Thyroid gland (tissue), 4 donors: ENCODE measurements at regions of chr20 and their contacts with region 1.

Region 1: DNA sequence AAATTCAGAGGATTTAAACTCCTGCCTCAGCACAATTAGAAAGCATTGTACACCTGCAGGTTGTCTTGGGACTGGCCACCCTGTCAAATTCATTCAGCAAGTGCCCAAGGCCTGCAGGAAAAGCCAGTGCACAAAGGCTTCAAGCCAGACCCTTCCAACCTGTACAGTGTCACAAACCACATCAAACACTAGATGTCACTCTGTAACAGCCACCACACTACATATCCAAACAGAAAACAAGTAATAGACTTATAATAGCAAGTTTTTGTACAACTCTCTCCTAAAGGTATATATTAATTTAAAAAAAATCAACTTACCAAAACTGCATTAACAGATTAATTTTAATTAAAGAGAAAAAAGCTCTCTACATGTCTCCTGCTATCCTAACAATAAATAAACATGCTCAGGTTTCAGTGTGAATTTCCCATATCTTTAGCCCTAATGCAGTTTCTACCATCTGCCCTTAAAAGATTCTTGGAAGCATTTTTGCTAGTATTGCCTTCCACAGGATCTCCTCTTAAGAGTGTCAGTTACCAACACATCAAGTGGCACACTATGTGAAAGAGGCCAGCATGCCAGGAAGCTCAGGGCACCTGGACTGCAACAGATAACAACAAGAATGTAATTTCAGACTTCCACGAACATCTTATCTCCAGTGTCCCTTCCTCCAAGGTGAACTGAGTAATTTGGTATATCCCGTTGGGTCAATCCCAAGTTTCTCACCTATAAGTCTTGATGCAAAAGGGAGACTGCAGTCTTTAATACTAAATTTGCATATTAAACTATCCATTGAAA is 47.5 kb downstream of the RALGAPA2 start:
- DNase-seq: peak; percentile 27
- H3K4me3 ChIP-seq: no peak overlapping the region
- H3K27ac ChIP-seq: peak overlapping the region in 1 of 3 donors; percentile 51
- H3K4me1 ChIP-seq: peaks cover 41 to 50% of the 10 kb centered on the region in 2 donors
- H3K27me3 ChIP-seq: no peaks in the 10 kb centered on the region
- CTCF ChIP-seq: peak in 5 of 6 experiments; percentile 10 to 76 (median 67)
- POLR2A ChIP-seq: no peak

Region 2: DNA sequence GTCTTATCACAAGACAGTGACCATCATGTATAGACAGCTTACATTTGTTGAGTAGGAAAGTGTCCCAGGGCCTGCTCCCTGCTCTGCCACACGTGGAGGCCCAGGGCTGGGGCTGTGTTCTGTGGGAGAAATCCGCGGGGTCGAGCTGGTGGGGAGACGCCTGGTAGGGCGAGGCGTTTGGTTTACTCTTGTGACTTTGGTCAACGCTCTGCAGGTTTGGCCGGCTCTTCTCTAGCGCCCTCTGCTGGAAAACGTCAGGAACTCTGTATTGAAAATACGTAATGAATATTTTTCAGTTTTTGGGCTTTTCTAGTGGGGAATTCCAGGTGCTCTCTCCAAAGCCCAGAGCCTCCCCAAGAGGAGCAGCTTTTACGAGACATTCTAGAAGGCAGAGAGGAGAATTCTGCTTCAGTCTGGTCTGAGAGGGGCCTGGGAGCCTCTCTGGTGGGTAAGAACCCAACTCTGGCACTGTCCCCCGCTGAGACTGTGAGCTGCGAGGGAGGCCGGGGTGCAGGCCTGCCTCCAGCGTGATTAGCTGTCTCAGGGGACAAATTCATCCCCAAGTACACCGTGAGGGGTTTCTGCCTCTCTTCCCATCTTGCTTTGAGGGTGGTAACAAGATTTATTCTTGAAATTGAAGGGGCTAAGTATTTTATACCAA is 160.1 kb after region 1 on chr20:
- intact Hi-C with region 1: loop called (anchors 5 kb)
- DNase-seq: peak; percentile 56 to 68
- H3K4me3 ChIP-seq: no peak overlapping the region
- H3K27ac ChIP-seq: no peak overlapping the region
- H3K4me1 ChIP-seq: peaks cover 0 to 9% of the 10 kb centered on the region in 2 donors
- H3K27me3 ChIP-seq: no peaks in the 10 kb centered on the region
- CTCF ChIP-seq: peak; percentile 71 to 83 (median 80)
- POLR2A ChIP-seq: no peak